Activated CD4-positive, alpha-beta T cell treated with anti-CD3 and anti-CD28 coated beads, Interleukin-2, amount 10 ng/mL, durations not matched to agents 7 days and 5 days (primary cell): ENCODE measurements at regions of chr11 and their contacts with region 1.

Region 1: DNA sequence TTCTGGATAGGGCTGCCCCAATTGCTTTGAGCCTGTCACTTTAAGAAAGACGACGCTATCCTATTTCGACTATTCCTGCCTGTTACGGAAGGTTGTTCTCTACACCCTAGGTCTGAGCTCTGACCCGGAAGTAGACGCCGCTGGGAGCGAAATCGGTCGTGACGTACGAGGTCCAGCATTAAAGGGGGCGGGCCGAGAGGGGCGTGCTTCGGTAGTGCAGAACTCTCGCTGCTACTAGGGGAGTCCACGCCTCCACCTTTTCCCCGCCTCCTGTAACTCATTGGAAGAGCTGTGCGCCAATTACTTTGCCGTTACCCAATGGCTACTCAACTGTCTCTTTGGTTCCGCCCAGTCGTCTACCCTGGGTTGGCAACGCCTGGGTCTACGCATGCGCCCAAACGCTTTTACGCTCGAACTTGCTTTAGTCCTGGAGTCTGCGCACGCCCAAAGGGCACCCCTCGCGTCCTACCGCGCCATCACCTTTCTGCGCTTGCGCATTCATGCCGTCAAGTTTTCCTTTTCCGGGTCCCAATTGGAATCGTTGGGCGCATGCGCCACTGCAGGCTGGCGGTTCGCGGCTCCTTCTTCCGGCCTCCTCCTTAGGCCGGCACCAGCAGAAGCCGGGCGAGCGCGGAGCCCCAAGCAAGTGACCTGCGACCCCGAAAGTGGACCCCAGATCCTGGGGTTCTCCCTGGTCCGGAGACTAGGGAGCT is at the start of gene PCNX3:
- DNase-seq: peak; percentile 100
- H3K4me3 Mint-ChIP-seq: peak within 1 kb of the TSS; percentile 95
- H3K27ac Mint-ChIP-seq: peak within 1 kb of the TSS; percentile 97
- H3K4me1 Mint-ChIP-seq: peaks cover 50% of the 10 kb centered on the region
- H3K27me3 Mint-ChIP-seq: no peaks in the 10 kb centered on the region
- total RNA-seq, gene PCNX3: 47.7 to 50.2 TPM

Region 2: GRCh38 chr11:65243773-65244172 is 371.6 kb before region 1 on chr11:
- CTCF ChIA-PET with region 1: no interaction called
- POLR2A ChIA-PET with region 1: interaction called, 12 read pairs
- DNase-seq: no peak
- H3K4me3 Mint-ChIP-seq: no peak overlapping the region
- H3K27ac Mint-ChIP-seq: no peak overlapping the region
- H3K4me1 Mint-ChIP-seq: no peaks in the 10 kb centered on the region
- H3K27me3 Mint-ChIP-seq: no peaks in the 10 kb centered on the region

Region 3: DNA sequence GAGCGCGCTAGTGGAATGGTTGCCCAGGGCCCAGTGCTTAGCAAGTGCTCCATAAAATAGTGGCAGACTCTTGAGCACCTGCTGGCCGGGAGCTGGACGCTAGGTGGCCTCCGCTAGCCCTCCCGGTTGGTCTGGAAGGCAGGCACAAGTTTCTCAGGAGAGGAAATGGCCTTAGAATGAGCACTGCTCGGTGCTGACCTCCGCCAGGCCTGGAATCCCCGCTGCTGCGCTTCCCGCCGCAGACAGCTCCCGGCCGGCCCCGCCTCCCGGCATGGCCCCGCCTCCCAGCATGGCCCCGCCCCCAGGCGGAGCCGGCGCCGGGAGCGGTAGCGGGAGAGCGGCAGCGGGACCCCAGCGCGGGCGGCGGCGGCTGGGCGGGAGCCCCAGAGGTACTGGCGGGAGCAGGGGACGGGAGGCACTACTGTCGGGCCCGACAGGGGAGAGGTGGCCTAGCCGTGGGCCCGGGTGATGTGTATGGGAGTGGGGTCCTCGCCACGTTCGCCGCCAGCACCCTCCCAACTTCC is 22.5 kb after region 1 on chr11 and contains the start of gene SIPA1:
- CTCF ChIA-PET with region 1: interaction called, 24 read pairs
- POLR2A ChIA-PET with region 1: no interaction called
- DNase-seq: peak; percentile 70
- H3K4me3 Mint-ChIP-seq: peak within 1 kb of the TSS; percentile 83
- H3K27ac Mint-ChIP-seq: peak within 1 kb of the TSS; percentile 90
- H3K4me1 Mint-ChIP-seq: peaks cover 54% of the 10 kb centered on the region
- H3K27me3 Mint-ChIP-seq: no peaks in the 10 kb centered on the region
- total RNA-seq, gene SIPA1: 229 to 235 TPM

Region 4: DNA sequence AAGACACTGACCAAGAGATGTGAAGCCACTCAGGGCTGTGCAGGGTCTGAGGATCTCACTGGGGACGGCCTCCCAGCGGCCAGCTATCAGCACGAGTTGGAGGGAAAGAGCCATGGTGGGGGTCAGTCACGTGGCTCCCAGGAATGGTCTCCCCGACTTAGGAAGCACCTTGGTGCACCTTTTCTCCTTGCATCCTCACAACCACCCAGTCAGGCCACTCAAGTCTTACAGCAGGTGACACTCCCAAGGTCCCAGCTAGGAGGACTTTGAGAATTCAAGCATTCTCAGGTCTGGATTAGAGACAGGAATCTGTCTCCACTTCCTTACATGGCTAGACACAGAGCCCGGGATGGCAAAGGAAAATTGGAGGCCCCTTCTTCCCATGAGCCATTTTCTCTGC is 102.5 kb after region 1 on chr11:
- CTCF ChIA-PET with region 1: no interaction called
- POLR2A ChIA-PET with region 1: no interaction called
- DNase-seq: no peak
- H3K4me3 Mint-ChIP-seq: no peak overlapping the region
- H3K27ac Mint-ChIP-seq: no peak overlapping the region
- H3K4me1 Mint-ChIP-seq: peaks cover 56% of the 10 kb centered on the region
- H3K27me3 Mint-ChIP-seq: no peaks in the 10 kb centered on the region